ENCODE measurements at regions of chr17 and their contacts with region 1.

Region 1: DNA sequence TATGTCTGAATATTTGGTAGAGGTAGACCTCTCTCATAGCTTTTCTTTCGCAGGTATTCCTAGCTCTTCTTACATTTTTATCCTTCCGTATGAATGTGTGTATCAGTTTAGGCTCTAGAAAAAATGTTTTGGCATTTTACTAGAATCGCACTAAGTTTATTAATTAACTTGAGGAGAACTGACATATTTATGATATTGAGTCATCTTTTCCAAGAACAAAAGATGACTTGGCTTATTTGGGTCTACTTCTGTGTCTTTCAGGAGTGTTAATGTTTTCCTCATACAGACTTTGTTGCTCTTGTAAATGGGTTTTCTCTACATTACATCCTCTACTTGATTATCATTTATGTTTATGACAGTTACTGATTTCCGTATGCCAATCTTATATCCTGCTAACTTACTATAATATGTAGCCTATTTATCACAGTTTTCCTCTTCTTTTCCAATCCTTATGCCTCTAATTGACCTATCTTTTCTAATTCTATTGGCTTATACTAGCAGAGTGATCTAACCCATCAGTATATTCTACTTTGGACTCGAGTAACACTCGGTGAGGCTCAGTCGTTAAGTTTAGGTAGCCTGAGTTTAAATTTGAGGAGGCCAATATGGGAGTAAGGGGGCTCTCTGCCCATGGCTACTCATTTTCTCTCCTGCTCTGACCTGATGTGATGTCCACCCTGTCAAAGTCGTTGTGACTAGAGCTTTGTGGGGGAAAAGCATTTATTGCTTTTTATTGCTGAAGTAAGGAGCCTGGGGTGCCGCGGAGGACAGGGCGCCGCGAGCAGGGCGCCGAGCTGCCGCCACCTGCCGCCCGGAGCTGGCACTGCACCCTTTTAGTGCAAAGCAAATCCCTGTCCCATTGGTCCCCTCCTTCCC is 20.0 kb downstream of the ST6GALNAC1 start:
- DNase-seq: peak; percentile 80
- ATAC-seq: peak; percentile 95
- H3K4me3 Mint-ChIP-seq: no peak overlapping the region
- H3K27ac Mint-ChIP-seq: no peak overlapping the region
- H3K4me1 Mint-ChIP-seq: peaks cover 5% of the 10 kb centered on the region
- H3K27me3 Mint-ChIP-seq: peaks cover 19% of the 10 kb centered on the region

Region 2: GRCh38 chr17:76523084-76524037 is 100.1 kb before region 1 on chr17:
- CTCF ChIA-PET with region 1: interaction called, 106 read pairs
- DNase-seq: peak; percentile 85
- ATAC-seq: peak; percentile 88
- H3K4me3 Mint-ChIP-seq: peak overlapping the region; percentile 8
- H3K27ac Mint-ChIP-seq: no peak overlapping the region
- H3K4me1 Mint-ChIP-seq: peaks cover 15% of the 10 kb centered on the region
- H3K27me3 Mint-ChIP-seq: peaks cover 7% of the 10 kb centered on the region

Region 3: DNA sequence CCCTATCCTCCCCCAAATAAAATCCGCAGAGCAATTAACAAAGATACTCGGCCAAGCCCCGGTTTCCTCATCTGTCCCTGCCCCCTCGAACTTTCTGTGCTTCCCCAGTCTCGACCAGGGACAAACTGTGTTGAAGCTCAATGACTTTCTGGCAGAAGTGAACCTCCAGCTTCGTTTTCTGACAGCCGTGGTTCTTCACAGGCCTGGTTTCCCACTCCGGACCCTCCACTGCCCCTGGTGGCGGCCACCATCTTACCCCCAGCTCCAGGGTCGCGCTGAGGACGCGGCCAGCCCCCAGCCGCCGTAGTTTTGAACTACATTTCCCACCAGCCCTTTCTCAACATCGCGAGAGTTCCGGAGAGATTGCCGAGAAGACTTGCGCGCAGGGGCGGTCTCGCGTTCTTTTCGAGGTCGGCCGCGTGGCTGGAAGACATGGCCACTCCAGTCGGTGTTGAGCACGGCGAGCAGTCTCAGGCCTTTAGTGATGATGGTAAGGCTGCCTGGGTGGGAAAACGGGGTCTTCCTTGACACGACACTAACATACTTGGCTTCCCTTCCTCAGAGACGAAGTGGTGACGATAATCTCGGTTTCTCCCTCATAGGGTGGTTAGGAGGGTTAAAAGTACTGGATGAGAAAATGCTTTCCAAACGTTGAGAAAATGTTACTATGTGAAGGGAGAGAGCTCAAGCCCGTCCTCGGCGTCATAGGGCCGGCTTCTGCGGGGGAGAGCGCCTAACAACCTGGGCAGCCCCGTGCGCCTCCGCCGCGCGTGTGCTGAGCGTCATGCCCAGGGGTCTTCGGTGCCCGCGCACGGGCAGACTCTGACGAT is 65.9 kb before region 1 on chr17:
- CTCF ChIA-PET with region 1: interaction called, 61 read pairs
- DNase-seq: peak; percentile 97
- ATAC-seq: peak; percentile 91
- H3K4me3 Mint-ChIP-seq: peak overlapping the region; percentile 98
- H3K27ac Mint-ChIP-seq: peak overlapping the region; percentile 96
- H3K4me1 Mint-ChIP-seq: peaks cover 60% of the 10 kb centered on the region
- H3K27me3 Mint-ChIP-seq: no peaks in the 10 kb centered on the region

Region 4: GRCh38 chr17:76597728-76598474 is 25.6 kb before region 1 on chr17:
- CTCF ChIA-PET with region 1: interaction called, 13 read pairs
- DNase-seq: no peak
- ATAC-seq: no peak
- H3K4me3 Mint-ChIP-seq: no peak overlapping the region
- H3K27ac Mint-ChIP-seq: no peak overlapping the region
- H3K4me1 Mint-ChIP-seq: peaks cover 12% of the 10 kb centered on the region
- H3K27me3 Mint-ChIP-seq: peaks cover 31% of the 10 kb centered on the region

Region 5: GRCh38 chr17:76671123-76671911 is 47.8 kb after region 1 on chr17:
- CTCF ChIA-PET with region 1: interaction called, 11 read pairs
- DNase-seq: peak; percentile 100
- ATAC-seq: peak; percentile 99
- H3K4me3 Mint-ChIP-seq: peak overlapping the region; percentile 90
- H3K27ac Mint-ChIP-seq: peak overlapping the region; percentile 88
- H3K4me1 Mint-ChIP-seq: peaks cover 26% of the 10 kb centered on the region
- H3K27me3 Mint-ChIP-seq: peaks cover 6% of the 10 kb centered on the region

Region 6: DNA sequence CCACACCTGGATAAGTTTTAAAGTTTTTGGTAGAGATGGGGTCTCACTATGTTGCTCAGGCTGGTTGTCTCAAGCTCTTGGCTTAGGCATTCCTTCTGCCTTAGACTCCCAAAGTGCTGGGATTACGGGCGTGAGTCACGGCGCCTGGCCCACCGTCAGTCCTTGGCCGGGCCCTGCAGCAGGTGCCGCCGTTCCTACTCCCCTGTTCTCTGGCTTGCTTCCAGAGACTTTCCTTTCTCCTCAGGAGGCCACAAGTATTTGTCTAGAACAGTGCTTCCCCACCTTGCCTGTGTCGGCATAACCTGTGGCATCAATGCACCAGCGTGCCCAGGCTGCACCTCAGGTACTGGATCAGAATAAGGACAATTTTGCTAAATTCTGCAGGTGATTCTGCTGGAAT is 241.7 kb after region 1 on chr17:
- CTCF ChIA-PET with region 1: no interaction called
- DNase-seq: no peak
- ATAC-seq: no peak
- H3K4me3 Mint-ChIP-seq: no peak overlapping the region
- H3K27ac Mint-ChIP-seq: no peak overlapping the region
- H3K4me1 Mint-ChIP-seq: peaks cover 6% of the 10 kb centered on the region
- H3K27me3 Mint-ChIP-seq: peaks cover 28% of the 10 kb centered on the region

Measured in activated CD8-positive, alpha-beta memory T cell treated with anti-CD3 and anti-CD28 coated beads, Interleukin-2, amount 10 ng/mL, durations not matched to agents 7 days and 5 days (primary cell).